A673 (cell line): ENCODE measurements at regions of chr12 and their contacts with region 1.

Region 1: DNA sequence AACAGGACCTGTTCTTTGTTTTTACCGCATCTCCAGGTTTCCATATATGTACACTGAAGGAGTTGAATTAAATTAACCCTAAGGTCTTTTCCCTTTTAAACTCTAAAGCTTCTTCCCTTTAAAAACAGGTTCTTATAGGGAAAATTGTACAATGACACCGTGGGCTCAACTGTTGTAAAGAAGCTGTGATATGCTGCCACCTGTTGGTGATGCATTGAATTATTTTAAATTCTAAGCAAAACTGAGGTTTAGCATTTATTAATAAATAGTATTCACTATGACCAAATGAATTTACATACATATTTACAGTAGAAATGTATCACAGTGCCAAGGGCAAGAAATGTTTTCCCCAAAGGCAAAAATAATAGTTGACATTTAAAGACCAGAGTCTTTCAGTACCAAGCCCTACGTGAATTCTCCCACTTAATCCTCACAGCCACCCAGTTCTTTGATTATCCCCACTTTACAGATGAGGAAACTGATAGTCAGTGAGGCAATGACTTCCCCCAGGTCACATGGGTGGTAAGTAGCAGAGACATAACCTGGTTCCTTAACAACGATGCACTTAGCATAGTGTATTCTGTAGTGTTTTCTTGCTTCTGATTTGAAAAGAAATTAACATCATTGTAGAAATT is 35.7 kb upstream of the TMEM263 start:
- DNase-seq: peak; percentile 72
- H3K4me3 ChIP-seq: no peak overlapping the region
- H3K27ac ChIP-seq: no peak overlapping the region
- H3K4me1 ChIP-seq: peaks cover 7% of the 10 kb centered on the region
- H3K27me3 ChIP-seq: no peaks in the 10 kb centered on the region
- CTCF ChIP-seq: peak; percentile 83

Region 2: GRCh38 chr12:106329231-106329982 is 590.6 kb before region 1 on chr12:
- CTCF ChIA-PET with region 1: no interaction called
- POLR2A ChIA-PET with region 1: no interaction called
- intact Hi-C with region 1: no loop called
- DNase-seq: no peak
- H3K4me3 ChIP-seq: no peak overlapping the region
- H3K27ac ChIP-seq: no peak overlapping the region
- H3K4me1 ChIP-seq: no peaks in the 10 kb centered on the region
- H3K27me3 ChIP-seq: no peaks in the 10 kb centered on the region
- CTCF ChIP-seq: no peak

Region 3: DNA sequence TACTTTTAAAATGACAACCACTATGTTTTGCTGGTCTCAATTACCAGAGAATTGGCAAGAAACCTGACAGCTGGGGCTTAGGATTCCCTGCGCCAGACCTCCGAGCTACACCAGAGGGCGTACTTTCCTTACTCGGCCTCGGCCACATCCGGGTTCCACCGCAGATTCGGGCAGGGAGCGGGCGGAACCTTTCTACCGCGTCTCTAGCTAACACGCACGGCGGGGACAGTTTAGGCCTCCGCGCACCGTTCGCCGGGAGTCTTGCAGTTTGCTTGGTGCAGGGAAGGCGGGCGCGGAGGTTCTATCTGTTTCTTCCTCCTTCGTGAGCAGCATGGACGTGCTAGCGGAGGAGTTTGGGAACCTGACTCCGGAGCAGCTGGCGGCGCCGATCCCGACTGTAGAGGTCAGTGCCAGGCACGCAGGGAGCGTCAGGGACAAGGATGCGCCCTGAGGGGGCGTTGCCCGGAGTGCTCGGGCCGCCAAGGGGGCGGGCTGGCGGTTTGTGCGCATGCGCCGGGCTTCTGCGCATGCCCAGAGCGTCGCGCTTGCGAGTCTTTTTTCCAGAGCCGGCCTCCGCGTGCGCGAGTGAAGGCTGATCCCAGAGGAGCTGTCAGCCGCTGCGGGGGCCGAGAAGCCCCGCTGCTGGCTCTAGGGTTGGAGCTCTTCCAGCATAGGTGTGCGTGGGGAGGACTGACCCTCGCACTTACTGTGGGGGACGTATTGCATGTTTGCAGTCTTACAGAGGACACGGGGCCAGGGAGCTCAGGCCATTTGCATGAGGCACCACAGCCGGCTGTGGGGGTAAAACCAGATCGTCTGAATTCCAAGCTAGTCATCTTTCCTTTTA is 562.3 kb before region 1 on chr12 and contains the start of gene POLR3B:
- CTCF ChIA-PET with region 1: interaction called, 14 read pairs
- POLR2A ChIA-PET with region 1: no interaction called
- intact Hi-C with region 1: loop called (anchors 2 kb)
- DNase-seq: peak; percentile 97
- H3K4me3 ChIP-seq: peak within 1 kb of the TSS; percentile 70
- H3K27ac ChIP-seq: peak within 1 kb of the TSS; percentile 89
- H3K4me1 ChIP-seq: peaks cover 8% of the 10 kb centered on the region
- H3K27me3 ChIP-seq: no peaks in the 10 kb centered on the region
- CTCF ChIP-seq: peak; percentile 92
- total RNA-seq, gene POLR3B: 13.7 and 14.8 TPM in 2 replicates

Region 4: DNA sequence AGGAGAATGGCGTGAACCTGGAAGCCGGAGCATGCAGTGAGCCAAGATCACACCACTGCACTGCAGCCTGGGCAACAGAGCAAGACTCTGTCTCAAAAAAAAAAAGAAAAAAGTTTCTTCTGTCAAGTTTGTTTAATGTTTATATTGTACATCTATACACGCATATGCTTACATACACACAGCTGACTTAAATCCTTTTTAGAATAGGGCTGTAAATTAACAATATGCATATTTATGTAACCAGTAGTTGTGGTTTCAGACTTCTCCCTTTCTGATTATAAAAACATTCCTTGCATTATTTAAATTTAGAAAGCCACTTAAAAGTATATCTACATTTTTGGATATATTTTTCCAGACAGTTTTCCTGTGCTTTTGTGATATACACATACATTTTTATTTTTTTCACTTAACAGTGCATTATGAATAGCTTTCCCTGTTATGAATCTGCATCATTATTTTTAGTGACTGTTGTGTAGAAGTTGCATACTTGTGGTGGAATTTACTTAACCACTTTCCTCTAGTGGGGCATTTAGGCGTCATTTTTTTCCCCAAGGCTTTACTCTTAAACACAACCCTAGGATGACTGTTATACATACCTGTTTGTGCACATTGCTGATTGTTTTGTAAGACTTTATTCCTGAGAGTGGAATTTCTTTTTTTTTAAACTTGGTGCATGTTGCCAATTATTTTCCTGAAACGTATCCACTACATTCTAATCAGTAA is 533.1 kb before region 1 on chr12:
- CTCF ChIA-PET with region 1: interaction called, 6 read pairs
- POLR2A ChIA-PET with region 1: no interaction called
- intact Hi-C with region 1: loop called (anchors 1 kb)
- DNase-seq: no peak
- H3K4me3 ChIP-seq: no peak overlapping the region
- H3K27ac ChIP-seq: no peak overlapping the region
- H3K4me1 ChIP-seq: no peaks in the 10 kb centered on the region
- H3K27me3 ChIP-seq: no peaks in the 10 kb centered on the region
- CTCF ChIP-seq: no peak

Region 5: DNA sequence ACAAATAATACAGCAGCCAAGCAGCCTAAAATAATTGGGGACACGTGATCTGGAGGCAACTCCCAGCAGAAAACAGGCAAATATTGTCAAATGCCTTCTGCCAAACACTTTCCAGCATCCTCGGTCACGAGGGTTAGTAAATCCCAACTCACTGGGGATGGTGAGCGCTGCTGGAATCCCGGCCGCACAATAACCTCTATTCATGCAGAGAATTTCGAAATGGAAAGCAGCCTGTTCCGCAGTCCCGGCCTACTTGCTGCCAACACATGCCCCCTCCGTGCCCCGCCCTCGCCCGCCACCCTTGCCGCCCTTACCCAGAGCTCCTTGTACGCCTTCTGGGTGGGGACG is 275.0 kb before region 1 on chr12:
- CTCF ChIA-PET with region 1: interaction called, 11 read pairs
- POLR2A ChIA-PET with region 1: no interaction called
- intact Hi-C with region 1: no loop called
- DNase-seq: peak; percentile 66
- H3K4me3 ChIP-seq: no peak overlapping the region
- H3K27ac ChIP-seq: no peak overlapping the region
- H3K4me1 ChIP-seq: peaks cover 4% of the 10 kb centered on the region
- H3K27me3 ChIP-seq: no peaks in the 10 kb centered on the region
- CTCF ChIP-seq: no peak

Region 6: DNA sequence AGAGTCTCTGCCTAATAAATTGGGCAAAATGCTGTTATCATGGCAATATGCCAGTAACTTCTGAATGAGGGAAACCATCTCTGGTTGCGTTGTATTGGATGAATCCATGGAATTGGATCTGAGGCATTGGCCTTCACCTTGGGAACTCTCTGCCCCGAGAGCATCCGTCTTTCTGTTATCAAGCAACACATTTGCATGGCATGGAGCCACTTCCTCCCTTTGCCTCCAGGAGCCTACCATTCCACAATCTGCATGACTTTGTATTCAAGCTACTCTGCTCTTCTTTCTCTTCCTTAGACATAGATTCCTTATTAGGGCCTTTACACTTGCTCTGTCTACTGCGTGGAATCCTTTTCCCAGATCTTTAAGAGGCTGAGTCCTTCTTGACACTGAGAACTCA is 88.3 kb before region 1 on chr12:
- CTCF ChIA-PET with region 1: no interaction called
- POLR2A ChIA-PET with region 1: no interaction called
- intact Hi-C with region 1: no loop called
- DNase-seq: no peak
- H3K4me3 ChIP-seq: no peak overlapping the region
- H3K27ac ChIP-seq: no peak overlapping the region
- H3K4me1 ChIP-seq: no peaks in the 10 kb centered on the region
- H3K27me3 ChIP-seq: no peaks in the 10 kb centered on the region
- CTCF ChIP-seq: no peak

Region 7: DNA sequence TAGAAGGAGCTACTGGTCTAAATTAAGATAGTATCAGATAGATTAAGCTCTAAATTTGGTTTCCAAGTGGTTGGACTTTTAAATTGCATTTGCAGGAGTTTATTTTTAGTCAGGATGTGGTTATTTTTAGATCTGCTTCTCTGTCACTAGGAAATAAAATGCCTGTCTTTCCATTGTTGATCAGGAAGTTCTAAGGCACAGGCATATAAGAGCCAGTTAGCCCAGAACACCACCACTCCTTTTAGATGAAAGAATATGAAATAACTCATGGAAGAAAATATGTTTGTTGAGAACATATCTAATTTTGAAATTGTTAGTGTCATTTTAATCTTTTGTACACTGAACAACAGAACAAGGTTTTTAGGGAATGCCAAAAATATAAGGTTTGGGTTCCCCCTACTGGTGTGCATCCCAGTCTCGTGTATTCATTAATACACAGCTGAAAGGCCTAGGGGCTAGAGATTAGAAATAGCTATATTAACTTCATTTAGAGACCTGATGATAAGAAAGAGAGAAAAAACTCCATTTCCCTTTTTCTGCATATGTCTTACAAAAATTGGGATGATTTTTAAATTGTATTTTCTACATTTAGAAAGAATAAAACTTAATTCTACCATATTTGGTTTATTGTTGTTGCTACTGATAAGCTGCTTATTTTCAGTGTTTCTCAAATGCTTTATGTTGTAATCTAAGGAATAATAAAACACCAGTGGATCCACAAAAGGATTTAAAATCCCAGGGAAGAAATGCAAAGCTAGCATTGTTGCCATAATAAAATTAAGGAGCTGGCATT is 78.3 kb before region 1 on chr12:
- CTCF ChIA-PET with region 1: interaction called, 12 read pairs
- POLR2A ChIA-PET with region 1: interaction called, 8 read pairs
- intact Hi-C with region 1: loop called (anchors 5 kb)
- DNase-seq: peak; percentile 73
- H3K4me3 ChIP-seq: no peak overlapping the region
- H3K27ac ChIP-seq: peak overlapping the region; percentile 67
- H3K4me1 ChIP-seq: peaks cover 28% of the 10 kb centered on the region
- H3K27me3 ChIP-seq: no peaks in the 10 kb centered on the region
- CTCF ChIP-seq: peak; percentile 86

Region 8: GRCh38 chr12:107093417-107094182 is 173.6 kb after region 1 on chr12 and contains the start of gene CRY1:
- CTCF ChIA-PET with region 1: no interaction called
- POLR2A ChIA-PET with region 1: no interaction called
- intact Hi-C with region 1: no loop called
- DNase-seq: peak; percentile 98
- H3K4me3 ChIP-seq: peak within 1 kb of the TSS; percentile 64
- H3K27ac ChIP-seq: peak within 1 kb of the TSS; percentile 90
- H3K4me1 ChIP-seq: peaks cover 9% of the 10 kb centered on the region
- H3K27me3 ChIP-seq: no peaks in the 10 kb centered on the region
- CTCF ChIP-seq: no peak
- total RNA-seq, gene CRY1: 33.6 and 41.0 TPM in 2 replicates